Transverse colon (tissue), 4 donors: ENCODE measurements at regions of chr12 and their contacts with region 1.

Region 1: GRCh38 chr12:55619354-55620138 is 17.1 kb upstream of the OR10P1 start:
- DNase-seq: peak; percentile 18
- H3K4me3 ChIP-seq: no peak overlapping the region
- H3K27ac ChIP-seq: no peak overlapping the region
- H3K4me1 ChIP-seq: no peaks in the 10 kb centered on the region
- H3K27me3 ChIP-seq: peaks cover 7% of the 10 kb centered on the region
- CTCF ChIP-seq: peak; percentile 77 to 87 (median 82)
- EP300 ChIP-seq: no peak
- POLR2A ChIP-seq: no peak

Region 2: DNA sequence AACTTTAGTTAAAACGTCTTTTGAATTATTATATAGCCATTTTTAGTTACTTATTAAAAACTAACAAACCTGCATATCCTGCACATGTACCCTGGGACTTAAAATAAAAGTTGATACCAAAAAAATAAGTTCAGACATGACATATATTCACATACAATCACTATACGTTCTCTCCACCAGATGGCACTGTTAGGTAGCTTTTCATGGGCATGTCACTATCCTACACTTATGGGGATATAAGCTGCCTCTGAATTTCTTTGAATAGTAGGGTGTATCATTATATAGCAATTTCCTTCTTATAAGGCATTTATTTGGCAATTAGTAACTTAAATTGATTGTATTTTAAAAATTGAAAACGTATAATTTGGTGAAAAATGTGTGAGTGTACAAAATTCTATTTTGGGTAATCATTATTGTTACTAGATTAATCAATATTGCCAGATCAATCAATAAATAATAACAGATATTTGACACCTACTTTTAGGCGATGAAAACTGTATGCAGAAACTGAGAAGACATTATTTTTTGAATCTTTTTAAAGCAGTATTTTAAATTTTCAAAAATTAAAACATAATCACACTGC is 430.5 kb before region 1 on chr12:
- in situ Hi-C with region 1: loop called in 3 of 4 experiments (anchors 10 kb)
- intact Hi-C with region 1: loop called (anchors 2 kb)
- DNase-seq: peak; percentile 12
- H3K4me3 ChIP-seq: no peak overlapping the region
- H3K27ac ChIP-seq: no peak overlapping the region
- H3K4me1 ChIP-seq: no peaks in the 10 kb centered on the region
- H3K27me3 ChIP-seq: peaks cover 12% of the 10 kb centered on the region
- CTCF ChIP-seq: peak; percentile 67 to 78 (median 72)
- EP300 ChIP-seq: no peak
- POLR2A ChIP-seq: no peak

Region 3: GRCh38 chr12:55194382-55194781 is 425.2 kb before region 1 on chr12:
- in situ Hi-C with region 1: loop called (anchors 5 to 10 kb)
- intact Hi-C with region 1: no loop called
- DNase-seq: no peak
- H3K4me3 ChIP-seq: no peak overlapping the region
- H3K27ac ChIP-seq: no peak overlapping the region
- H3K4me1 ChIP-seq: no peaks in the 10 kb centered on the region
- H3K27me3 ChIP-seq: peaks cover 4% of the 10 kb centered on the region
- CTCF ChIP-seq: no peak
- EP300 ChIP-seq: no peak
- POLR2A ChIP-seq: no peak